ENCODE measurements at regions of chr6 and their contacts with region 1.

Region 1: GRCh38 chr6:25829375-25829774 is 2.5 kb downstream of the SLC17A1 start:
- DNase-seq: no peak
- H3K4me3 Mint-ChIP-seq: no peak overlapping the region
- H3K27ac Mint-ChIP-seq: no peak overlapping the region
- H3K4me1 Mint-ChIP-seq: peaks cover 5% of the 10 kb centered on the region
- H3K27me3 Mint-ChIP-seq: peaks cover 26% of the 10 kb centered on the region

Region 2: GRCh38 chr6:25815194-25815593 is 14.2 kb before region 1 on chr6:
- intact Hi-C with region 1: no loop called
- DNase-seq: no peak
- H3K4me3 Mint-ChIP-seq: no peak overlapping the region
- H3K27ac Mint-ChIP-seq: no peak overlapping the region
- H3K4me1 Mint-ChIP-seq: no peaks in the 10 kb centered on the region
- H3K27me3 Mint-ChIP-seq: peaks cover 25% of the 10 kb centered on the region

Region 3: GRCh38 chr6:25842526-25843277 is 13.3 kb after region 1 on chr6:
- intact Hi-C with region 1: loop called (anchors 1 kb)
- DNase-seq: no peak
- H3K4me3 Mint-ChIP-seq: no peak overlapping the region
- H3K27ac Mint-ChIP-seq: no peak overlapping the region
- H3K4me1 Mint-ChIP-seq: no peaks in the 10 kb centered on the region
- H3K27me3 Mint-ChIP-seq: peaks cover 15% of the 10 kb centered on the region